ENCODE measurements at regions of chr13 and their contacts with region 1.

Region 1: GRCh38 chr13:101127741-101128353 is 288.5 kb downstream of the NALCN start:
- DNase-seq: peak; percentile 49
- H3K4me3 ChIP-seq: no peak overlapping the region
- CTCF ChIP-seq: peak; percentile 78

Region 2: GRCh38 chr13:101492251-101492910 is 364.5 kb after region 1 on chr13:
- in situ Hi-C with region 1: loop called (anchors 25 kb)
- DNase-seq: no peak
- H3K4me3 ChIP-seq: no peak overlapping the region
- CTCF ChIP-seq: no peak

Region 3: DNA sequence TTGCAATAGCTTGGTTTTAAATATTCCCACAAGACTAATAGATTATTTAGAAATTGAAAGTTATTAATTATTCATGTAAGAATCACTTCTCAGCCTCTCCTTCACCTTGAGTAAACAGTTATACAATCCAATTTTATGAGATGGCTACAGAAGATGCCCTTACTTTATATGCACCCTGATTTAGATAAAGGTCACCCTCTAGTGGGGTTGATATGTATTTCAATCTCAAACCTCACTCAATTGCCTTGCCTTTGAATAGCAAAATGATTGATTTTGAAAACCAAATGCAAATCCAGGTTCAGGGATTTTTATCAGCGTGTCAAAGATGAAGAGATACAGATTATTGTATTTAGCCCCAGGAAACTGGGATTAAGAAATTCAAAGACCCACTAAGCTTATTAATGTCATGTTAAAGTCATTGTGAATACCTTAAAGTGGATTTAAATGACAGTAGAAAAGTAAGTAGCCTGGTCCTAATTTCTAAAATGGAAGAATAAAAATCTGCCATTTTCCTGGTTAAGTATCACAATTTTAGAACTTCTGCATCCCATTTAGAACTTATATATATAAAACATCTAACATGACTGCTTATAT is 629.7 kb after region 1 on chr13:
- in situ Hi-C with region 1: loop called (anchors 25 kb)
- DNase-seq: peak; percentile 43
- H3K4me3 ChIP-seq: no peak overlapping the region
- CTCF ChIP-seq: peak; percentile 43